Heart left ventricle (tissue), 16 donors: ENCODE measurements at regions of chr5 and their contacts with region 1.

Region 1: DNA sequence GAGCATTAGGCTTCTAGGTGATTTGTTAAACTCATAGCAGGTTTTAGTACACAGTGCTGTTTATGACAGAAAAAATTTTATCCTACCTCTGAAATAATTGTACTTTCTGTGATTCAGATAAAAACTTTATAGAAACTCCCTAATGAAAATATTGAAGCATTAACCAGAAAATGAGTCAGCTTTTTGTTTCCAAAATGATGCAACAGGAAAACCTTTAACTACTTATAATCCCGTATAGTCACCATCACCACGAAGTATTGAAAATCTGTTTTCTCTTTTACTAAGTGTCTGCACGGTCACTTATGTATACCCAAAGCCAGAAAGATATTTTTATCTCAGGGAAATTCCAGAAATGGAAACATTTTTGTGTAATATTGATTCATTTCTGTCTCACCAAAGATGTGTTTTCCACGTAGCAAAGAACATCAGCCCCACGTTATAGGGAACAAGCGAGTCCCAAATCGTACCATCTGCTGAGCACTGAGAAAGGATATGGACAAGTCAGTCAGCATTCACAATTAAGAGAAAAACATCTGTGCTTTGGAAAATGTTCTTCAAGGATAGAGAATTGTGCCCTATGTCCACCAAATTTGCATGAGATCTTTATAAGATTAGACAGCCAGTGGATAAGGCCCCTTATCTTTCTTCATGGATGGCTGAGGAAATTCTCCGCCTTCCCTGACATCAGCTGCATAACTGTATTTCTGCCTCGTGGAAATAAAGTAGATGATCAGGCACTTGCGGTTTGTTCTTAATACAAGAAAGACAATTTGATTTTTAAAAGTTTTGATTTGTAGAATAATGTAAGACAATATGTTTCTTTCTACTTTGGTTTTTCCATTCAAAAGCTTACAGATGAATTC is 41.9 kb downstream of the TNFAIP8 start:
- DNase-seq: no peak
- ATAC-seq: no peak
- H3K4me3 ChIP-seq: no peak overlapping the region
- H3K27ac ChIP-seq: peak overlapping the region in 2 of 12 donors; percentile 34 to 60
- H3K4me1 ChIP-seq: peaks cover 0 to 55% (median 3%) of the 10 kb centered on the region in 12 donors
- H3K27me3 ChIP-seq: no peaks in the 10 kb centered on the region
- CTCF ChIP-seq: no peak
- POLR2A ChIP-seq: no peak

Region 2: GRCh38 chr5:119355685-119356611 is 41.8 kb before region 1 on chr5 and contains the start of gene TNFAIP8:
- intact Hi-C with region 1: loop called in 1 of 10 experiments (anchors 5 kb)
- DNase-seq: peak; percentile 62 to 81 (median 71)
- ATAC-seq: peak; percentile 69 to 88 (median 87)
- H3K4me3 ChIP-seq: peak within 1 kb of the TSS; percentile 31 to 84 (median 63)
- H3K27ac ChIP-seq: peak within 1 kb of the TSS in 10 of 12 donors; percentile 12 to 93 (median 60)
- H3K4me1 ChIP-seq: peaks cover 0 to 69% (median 7%) of the 10 kb centered on the region in 12 donors
- H3K27me3 ChIP-seq: no peaks in the 10 kb centered on the region
- CTCF ChIP-seq: no peak
- POLR2A ChIP-seq: peak in 1 of 2 donors; percentile 14
- total RNA-seq, gene TNFAIP8: 3.6 to 30.8 (median 13.9) TPM